ENCODE measurements at regions of chr2 and their contacts with region 1.

Region 1: DNA sequence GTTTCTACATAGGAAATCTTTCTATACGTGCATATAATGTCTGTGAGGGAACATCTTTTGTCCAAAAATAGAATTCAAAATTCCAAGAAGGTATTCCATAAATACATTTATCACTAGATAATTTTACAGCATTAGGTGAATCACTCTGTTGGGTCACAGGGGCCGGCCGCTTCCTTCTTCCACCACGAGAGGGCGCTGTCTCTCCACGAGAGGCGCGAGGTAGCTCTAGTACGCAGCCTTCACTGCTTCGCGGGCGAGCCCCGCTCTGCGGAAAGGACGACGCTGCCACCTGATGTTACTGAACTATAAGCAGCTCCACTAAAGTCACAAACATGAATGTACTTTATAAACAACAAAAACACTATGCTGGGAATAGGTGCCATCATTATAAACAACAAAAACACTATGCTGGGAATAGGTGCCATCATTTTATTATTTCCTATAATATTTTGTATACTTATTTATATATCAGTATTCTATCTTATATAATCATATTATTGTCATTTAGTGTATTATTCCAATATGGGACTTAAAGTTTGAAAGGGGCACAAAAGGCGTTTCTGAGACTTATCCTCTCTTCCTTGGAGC is 69.4 kb upstream of the REV1 start:
- DNase-seq: peak; percentile 79 to 84
- H3K4me3 ChIP-seq: no peak overlapping the region
- H3K4me3 Mint-ChIP-seq: no peak overlapping the region
- H3K27ac Mint-ChIP-seq: no peak overlapping the region
- H3K4me1 ChIP-seq: no peaks in the 10 kb centered on the region
- H3K4me1 Mint-ChIP-seq: no peaks in the 10 kb centered on the region
- H3K27me3 ChIP-seq: no peaks in the 10 kb centered on the region
- H3K27me3 Mint-ChIP-seq: peaks cover 14% of the 10 kb centered on the region
- CTCF ChIP-seq: peak; percentile 96 to 98

Region 2: GRCh38 chr2:99217929-99218501 is 341.2 kb before region 1 on chr2:
- CTCF ChIA-PET with region 1: no interaction called
- POLR2A ChIA-PET with region 1: no interaction called
- intact Hi-C with region 1: no loop called
- DNase-seq: no peak
- H3K4me3 ChIP-seq: no peak overlapping the region
- H3K4me3 Mint-ChIP-seq: no peak overlapping the region
- H3K27ac Mint-ChIP-seq: no peak overlapping the region
- H3K4me1 ChIP-seq: no peaks in the 10 kb centered on the region
- H3K4me1 Mint-ChIP-seq: no peaks in the 10 kb centered on the region
- H3K27me3 ChIP-seq: no peaks in the 10 kb centered on the region
- H3K27me3 Mint-ChIP-seq: no peaks in the 10 kb centered on the region
- CTCF ChIP-seq: no peak

Region 3: DNA sequence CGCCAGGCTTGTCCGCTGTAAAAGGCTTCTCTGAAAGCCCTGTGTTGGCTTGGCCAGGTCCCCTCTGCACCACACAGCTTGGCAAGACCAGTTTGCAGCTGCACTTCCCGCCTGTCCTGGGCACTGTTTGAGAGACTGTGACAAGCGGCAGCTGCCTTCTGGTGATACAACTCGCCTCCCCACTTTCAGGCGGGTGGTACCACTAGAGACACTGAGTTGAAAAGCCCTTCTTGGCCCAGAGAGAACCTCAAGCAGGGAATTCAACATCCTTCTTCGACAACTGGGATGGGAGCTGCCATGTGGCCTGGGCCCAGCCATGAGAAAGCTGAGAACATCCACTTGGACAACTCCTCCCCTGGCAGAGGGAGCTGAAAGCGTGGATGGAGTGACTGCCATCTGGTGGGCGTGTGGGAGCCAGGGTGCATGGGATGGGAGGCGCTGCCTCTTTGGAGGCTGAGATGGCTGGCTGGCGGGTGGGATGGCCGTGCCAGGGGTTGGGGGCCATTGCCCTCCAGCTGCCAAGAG is 56.1 kb after region 1 on chr2:
- CTCF ChIA-PET with region 1: interaction called, 32 read pairs
- POLR2A ChIA-PET with region 1: no interaction called
- intact Hi-C with region 1: loop called (anchors 1 kb)
- DNase-seq: peak in 1 of 2 experiments; percentile 55
- H3K4me3 ChIP-seq: no peak overlapping the region
- H3K4me3 Mint-ChIP-seq: no peak overlapping the region
- H3K27ac Mint-ChIP-seq: no peak overlapping the region
- H3K4me1 ChIP-seq: 0 out of 2 replicates have a peak, but pooled peaks cover under 1% of the 10 kb centered on the region
- H3K4me1 Mint-ChIP-seq: peaks cover under 1% of the 10 kb centered on the region
- H3K27me3 ChIP-seq: no peaks in the 10 kb centered on the region; the same call in 1 of the 2 replicates
- H3K27me3 Mint-ChIP-seq: peaks cover 13% of the 10 kb centered on the region
- CTCF ChIP-seq: peak; percentile 54 to 61

Region 4: GRCh38 chr2:99697811-99698568 is 138.8 kb after region 1 on chr2:
- CTCF ChIA-PET with region 1: no interaction called
- POLR2A ChIA-PET with region 1: no interaction called
- intact Hi-C with region 1: loop called (anchors 10 kb)
- DNase-seq: no peak
- H3K4me3 ChIP-seq: no peak overlapping the region
- H3K4me3 Mint-ChIP-seq: no peak overlapping the region
- H3K27ac Mint-ChIP-seq: no peak overlapping the region
- H3K4me1 ChIP-seq: no peaks in the 10 kb centered on the region
- H3K4me1 Mint-ChIP-seq: no peaks in the 10 kb centered on the region
- H3K27me3 ChIP-seq: no peaks in the 10 kb centered on the region
- H3K27me3 Mint-ChIP-seq: peaks cover 10% of the 10 kb centered on the region
- CTCF ChIP-seq: no peak

Region 5: DNA sequence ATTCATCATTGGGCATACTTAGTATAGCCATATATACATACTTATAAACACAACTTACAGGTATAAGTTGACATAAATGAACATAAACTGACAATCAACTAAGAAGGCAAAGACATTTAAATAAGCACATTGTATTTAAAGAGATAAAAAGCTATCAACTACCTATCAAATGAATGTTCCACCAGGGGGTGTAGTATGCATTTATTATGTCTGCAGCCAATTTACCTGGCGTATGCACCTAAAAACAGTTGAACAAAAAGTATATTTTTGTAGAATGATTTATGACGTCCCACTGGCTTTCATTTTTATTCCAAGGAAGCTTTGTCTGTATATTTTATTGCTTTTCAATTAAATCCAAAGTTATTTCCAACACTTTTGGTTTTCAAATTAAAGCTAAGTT is 259.7 kb after region 1 on chr2:
- CTCF ChIA-PET with region 1: no interaction called
- POLR2A ChIA-PET with region 1: no interaction called
- intact Hi-C with region 1: loop called (anchors 2 kb)
- DNase-seq: no peak
- H3K4me3 ChIP-seq: no peak overlapping the region
- H3K4me3 Mint-ChIP-seq: no peak overlapping the region
- H3K27ac Mint-ChIP-seq: no peak overlapping the region
- H3K4me1 ChIP-seq: no peaks in the 10 kb centered on the region
- H3K4me1 Mint-ChIP-seq: no peaks in the 10 kb centered on the region
- H3K27me3 ChIP-seq: no peaks in the 10 kb centered on the region
- H3K27me3 Mint-ChIP-seq: peaks cover 21% of the 10 kb centered on the region
- CTCF ChIP-seq: peak in 1 of 2 experiments; percentile 5

Region 6: GRCh38 chr2:100242891-100243619 is 683.9 kb after region 1 on chr2:
- CTCF ChIA-PET with region 1: interaction called, 5 read pairs
- POLR2A ChIA-PET with region 1: no interaction called
- intact Hi-C with region 1: loop called (anchors 1 kb)
- DNase-seq: peak; percentile 63 to 71
- H3K4me3 ChIP-seq: no peak overlapping the region
- H3K4me3 Mint-ChIP-seq: no peak overlapping the region
- H3K27ac Mint-ChIP-seq: no peak overlapping the region
- H3K4me1 ChIP-seq: no peaks in the 10 kb centered on the region
- H3K4me1 Mint-ChIP-seq: no peaks in the 10 kb centered on the region
- H3K27me3 ChIP-seq: no peaks in the 10 kb centered on the region
- H3K27me3 Mint-ChIP-seq: peaks cover 9% of the 10 kb centered on the region
- CTCF ChIP-seq: peak; percentile 60 to 74

Region 7: GRCh38 chr2:100262555-100263320 is 703.6 kb after region 1 on chr2:
- CTCF ChIA-PET with region 1: interaction called, 5 read pairs
- POLR2A ChIA-PET with region 1: no interaction called
- intact Hi-C with region 1: loop called (anchors 1 kb)
- DNase-seq: peak; percentile 54 to 63
- H3K4me3 ChIP-seq: no peak overlapping the region
- H3K4me3 Mint-ChIP-seq: no peak overlapping the region
- H3K27ac Mint-ChIP-seq: no peak overlapping the region
- H3K4me1 ChIP-seq: no peaks in the 10 kb centered on the region
- H3K4me1 Mint-ChIP-seq: no peaks in the 10 kb centered on the region
- H3K27me3 ChIP-seq: no peaks in the 10 kb centered on the region; the same call in 1 of the 2 replicates
- H3K27me3 Mint-ChIP-seq: peaks cover 11% of the 10 kb centered on the region
- CTCF ChIP-seq: peak; percentile 79 to 90